ENCODE measurements at regions of chr6 and their contacts with region 1.

Region 1: GRCh38 chr6:107114213-107114905 is 956 bp downstream of the BEND3 start:
- DNase-seq: peak; percentile 87 to 95 (median 88)
- ATAC-seq: peak; percentile 79 to 97 (median 94)
- H3K4me3 ChIP-seq: peak overlapping the region; percentile 37 to 95 (median 68)
- H3K27ac ChIP-seq: peak overlapping the region in 11 of 12 donors; percentile 13 to 84 (median 59)
- H3K4me1 ChIP-seq: peaks cover 0 to 25% (median 16%) of the 10 kb centered on the region in 12 donors
- H3K27me3 ChIP-seq: peaks cover 0 to 6% (median 0%) of the 10 kb centered on the region in 9 donors
- CTCF ChIP-seq: peak; percentile 64 to 99 (median 95)
- POLR2A ChIP-seq: no peak

Region 2: GRCh38 chr6:106488494-106489370 is 625.6 kb before region 1 on chr6:
- intact Hi-C with region 1: no loop called
- DNase-seq: no peak
- ATAC-seq: no peak
- H3K4me3 ChIP-seq: no peak overlapping the region
- H3K27ac ChIP-seq: no peak overlapping the region
- H3K4me1 ChIP-seq: no peaks in the 10 kb centered on the region
- H3K27me3 ChIP-seq: no peaks in the 10 kb centered on the region
- CTCF ChIP-seq: no peak
- POLR2A ChIP-seq: no peak

Region 3: GRCh38 chr6:107021446-107022185 is 92.7 kb before region 1 on chr6:
- intact Hi-C with region 1: loop called in 5 of 10 experiments (anchors 5 to 10 kb)
- DNase-seq: no peak
- ATAC-seq: no peak
- H3K4me3 ChIP-seq: no peak overlapping the region
- H3K27ac ChIP-seq: no peak overlapping the region
- H3K4me1 ChIP-seq: peaks cover 0 to 10% (median 3%) of the 10 kb centered on the region in 12 donors
- H3K27me3 ChIP-seq: no peaks in the 10 kb centered on the region
- CTCF ChIP-seq: no peak
- POLR2A ChIP-seq: no peak

Region 4: GRCh38 chr6:107026965-107027364 is 87.4 kb before region 1 on chr6:
- intact Hi-C with region 1: loop called (anchors 2 to 10 kb)
- DNase-seq: no peak
- ATAC-seq: no peak
- H3K4me3 ChIP-seq: no peak overlapping the region
- H3K27ac ChIP-seq: no peak overlapping the region
- H3K4me1 ChIP-seq: peaks cover 0 to 25% (median 13%) of the 10 kb centered on the region in 12 donors
- H3K27me3 ChIP-seq: no peaks in the 10 kb centered on the region
- CTCF ChIP-seq: no peak
- POLR2A ChIP-seq: no peak

Region 5: GRCh38 chr6:107033126-107033525 is 81.2 kb before region 1 on chr6:
- intact Hi-C with region 1: loop called (anchors 2 to 10 kb)
- DNase-seq: no peak
- ATAC-seq: no peak
- H3K4me3 ChIP-seq: no peak overlapping the region
- H3K27ac ChIP-seq: no peak overlapping the region
- H3K4me1 ChIP-seq: peaks cover 0 to 25% (median 13%) of the 10 kb centered on the region in 12 donors
- H3K27me3 ChIP-seq: no peaks in the 10 kb centered on the region
- CTCF ChIP-seq: no peak
- POLR2A ChIP-seq: no peak

Measured in heart left ventricle (tissue), 16 donors.